ENCODE measurements at regions of chr10 and their contacts with region 1.

Region 1: DNA sequence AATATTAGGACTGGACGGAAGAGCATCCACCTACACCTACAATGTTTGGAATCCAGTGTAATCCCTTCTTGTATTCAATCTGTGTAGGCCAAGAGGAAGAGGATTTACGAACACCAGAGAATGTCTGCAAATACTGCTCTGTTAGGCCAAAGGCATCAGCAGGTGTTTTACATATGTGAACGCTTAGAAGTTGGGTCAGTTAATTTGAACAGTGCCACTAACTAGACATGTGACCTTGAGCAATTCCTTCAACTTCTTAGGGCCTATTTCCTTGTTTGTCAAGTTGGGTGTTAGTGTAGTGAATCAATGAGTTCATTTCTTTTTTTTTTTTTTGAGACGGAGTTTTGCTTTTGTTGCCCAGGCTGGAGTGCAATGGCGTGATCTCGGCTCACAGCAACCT is 35.4 kb downstream of the MYPN start:
- DNase-seq: peak in 1 of 6 donors; percentile 6
- ATAC-seq: peak; percentile 88 to 98 (median 95)
- H3K4me3 ChIP-seq: no peak overlapping the region
- H3K27ac ChIP-seq: peak overlapping the region in 2 of 4 donors; percentile 20 to 42
- H3K4me1 ChIP-seq: peaks cover 0 to 4% (median 0%) of the 10 kb centered on the region in 3 donors
- H3K27me3 ChIP-seq: no peaks in the 10 kb centered on the region
- CTCF ChIP-seq: no peak

Region 2: DNA sequence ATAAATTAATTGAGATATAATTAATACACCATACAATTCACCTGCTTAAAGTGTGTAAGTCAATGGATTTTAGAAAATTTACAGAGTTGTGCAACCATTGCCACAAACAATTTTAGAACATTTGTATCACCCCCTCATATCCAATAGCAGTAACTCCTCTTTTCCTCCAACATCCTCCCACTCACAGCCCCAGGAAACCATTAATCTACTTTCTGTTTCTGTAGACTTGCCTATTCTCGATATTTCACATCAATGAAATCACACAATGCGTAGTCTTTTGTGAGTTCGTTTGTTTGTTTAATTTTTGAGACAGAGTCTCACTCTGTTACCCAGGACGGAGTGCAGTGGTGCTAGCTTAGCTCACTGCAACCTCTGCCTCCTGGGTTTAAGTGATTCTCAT is 56.0 kb before region 1 on chr10:
- intact Hi-C with region 1: loop called in 1 of 3 experiments (anchors 5 kb)
- DNase-seq: no peak
- ATAC-seq: no peak
- H3K4me3 ChIP-seq: no peak overlapping the region
- H3K27ac ChIP-seq: no peak overlapping the region
- H3K4me1 ChIP-seq: no peaks in the 10 kb centered on the region
- H3K27me3 ChIP-seq: no peaks in the 10 kb centered on the region
- CTCF ChIP-seq: no peak

Measured in pancreas (tissue), 10 donors.